CD4-positive, alpha-beta memory T cell (primary cell): ENCODE measurements at regions of chr13 and their contacts with region 1.

Region 1: DNA sequence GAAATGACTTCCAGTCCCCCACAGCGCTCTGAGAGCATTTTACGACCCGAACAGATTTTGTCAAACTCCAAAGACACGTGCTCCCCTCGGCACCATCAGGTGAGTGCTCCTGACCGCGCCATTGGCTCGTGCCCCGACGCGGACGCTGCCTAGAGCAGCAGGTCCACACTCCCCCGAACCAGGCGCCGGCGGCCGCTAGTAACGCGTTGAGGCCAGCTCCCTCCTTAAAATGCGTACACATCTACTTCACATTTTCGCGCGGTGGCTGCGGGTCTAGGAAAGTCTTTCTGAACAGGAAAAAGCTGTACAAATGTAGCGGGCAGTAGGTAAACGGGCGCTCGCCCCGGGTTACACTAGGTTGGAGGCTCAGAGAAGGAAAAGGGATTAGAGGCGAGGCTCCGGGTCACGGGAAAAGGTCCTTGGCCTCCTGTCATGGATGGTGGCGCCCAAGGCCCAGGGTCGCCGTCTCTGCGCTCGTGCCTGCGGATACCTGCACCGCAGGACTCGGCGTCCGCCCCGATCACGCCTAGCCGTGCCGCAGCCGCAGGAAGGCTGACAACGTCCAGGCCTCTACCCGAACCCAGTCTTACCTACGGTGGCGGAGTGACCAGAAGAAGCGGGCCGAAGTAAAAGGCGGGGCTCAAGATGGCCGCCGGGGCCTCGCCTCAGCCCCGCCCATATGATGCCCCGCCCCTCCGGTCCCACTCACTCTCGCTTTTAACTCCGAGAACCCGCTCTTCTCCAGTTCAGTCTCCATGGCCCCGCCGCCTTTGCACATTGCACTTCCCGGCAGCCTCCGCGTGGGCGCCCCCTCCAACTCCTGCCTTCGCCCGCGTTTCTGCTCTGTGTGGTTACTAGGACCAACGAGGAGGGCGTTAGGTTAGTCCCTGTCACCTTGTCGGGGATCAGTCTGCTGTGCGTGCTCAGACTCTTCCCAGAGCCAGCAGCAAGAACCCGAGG is at the start of gene ESD:
- DNase-seq: peak; percentile 80 to 91 (median 85)
- H3K4me3 ChIP-seq: peak within 1 kb of the TSS; percentile 84 to 89
- H3K4me3 Mint-ChIP-seq: peak within 1 kb of the TSS; percentile 90 to 99 (median 98)
- H3K27ac ChIP-seq: peak within 1 kb of the TSS; percentile 72
- H3K27ac Mint-ChIP-seq: peak within 1 kb of the TSS; percentile 93 to 99 (median 99)
- H3K4me1 ChIP-seq: peaks cover 44% of the 10 kb centered on the region
- H3K4me1 Mint-ChIP-seq: peaks cover 21 to 45% (median 36%) of the 10 kb centered on the region in 4 donors
- H3K27me3 ChIP-seq: no peaks in the 10 kb centered on the region
- H3K27me3 Mint-ChIP-seq: no peaks in the 10 kb centered on the region
- total RNA-seq, gene ESD: 57.5 to 61.2 TPM

Region 2: DNA sequence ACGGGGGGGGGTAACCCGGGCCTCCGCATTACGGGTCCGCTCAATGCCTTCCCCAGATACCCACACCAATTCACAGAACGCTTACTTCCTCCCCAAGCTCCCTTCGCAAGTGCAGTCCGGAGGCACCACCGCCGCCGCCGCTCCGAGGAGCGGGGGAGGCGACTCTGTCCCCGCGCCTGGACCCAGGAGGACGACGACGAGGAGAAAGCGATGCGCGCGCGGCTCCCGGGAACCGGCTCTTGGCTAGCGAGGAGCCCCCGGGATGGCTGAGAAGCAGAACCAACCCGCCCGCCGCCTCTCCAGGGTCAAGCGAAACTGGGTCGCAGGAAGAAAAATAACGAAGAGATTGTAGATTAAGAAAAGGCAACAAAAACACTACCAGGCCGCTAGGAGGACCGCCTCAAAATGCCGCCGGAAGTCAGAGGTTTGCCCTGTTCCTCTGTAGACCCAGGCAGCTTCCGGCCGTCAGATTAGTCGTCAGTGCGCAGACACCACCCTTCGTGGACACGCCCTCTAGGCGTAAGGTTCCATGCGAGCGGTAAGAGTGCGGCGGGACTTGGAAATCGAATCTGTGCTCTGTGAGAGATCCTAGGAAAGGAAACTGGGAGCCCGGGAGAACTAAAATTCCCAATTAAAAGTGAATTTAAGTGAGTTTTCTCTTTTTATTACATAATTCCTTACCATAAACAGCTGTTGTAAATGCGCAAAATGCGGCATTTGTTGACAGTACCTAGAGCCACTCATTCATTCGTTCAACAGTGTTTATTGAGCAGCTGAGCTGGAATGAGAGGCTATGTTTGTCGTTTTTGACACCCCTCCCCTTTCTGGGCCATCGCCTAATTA is 744.3 kb before region 1 on chr13 and contains the start of gene ZC3H13:
- CTCF ChIA-PET with region 1: no interaction called
- POLR2A ChIA-PET with region 1: no interaction called
- intact Hi-C with region 1: loop called (anchors 5 kb)
- DNase-seq: peak; percentile 91 to 97 (median 93)
- H3K4me3 ChIP-seq: peak within 1 kb of the TSS; percentile 59 to 88
- H3K4me3 Mint-ChIP-seq: peak within 1 kb of the TSS; percentile 88 to 99 (median 95)
- H3K27ac ChIP-seq: peak within 1 kb of the TSS; percentile 95
- H3K27ac Mint-ChIP-seq: peak within 1 kb of the TSS; percentile 93 to 99 (median 98)
- H3K4me1 ChIP-seq: peaks cover 38% of the 10 kb centered on the region
- H3K4me1 Mint-ChIP-seq: peaks cover 28 to 49% (median 37%) of the 10 kb centered on the region in 4 donors
- H3K27me3 ChIP-seq: peaks cover 4% of the 10 kb centered on the region
- H3K27me3 Mint-ChIP-seq: peaks cover 7 to 14% of the 10 kb centered on the region in 2 donors
- total RNA-seq, gene ZC3H13: 55.1 to 65.5 TPM

Region 3: GRCh38 chr13:46893798-46894560 is 97.2 kb after region 1 on chr13:
- CTCF ChIA-PET with region 1: no interaction called
- POLR2A ChIA-PET with region 1: no interaction called
- intact Hi-C with region 1: loop called (anchors 1 kb)
- DNase-seq: peak; percentile 43 to 55 (median 52)
- H3K4me3 ChIP-seq: peak overlapping the region in 1 of 2 donors; percentile 34
- H3K4me3 Mint-ChIP-seq: peak overlapping the region; percentile 68 to 77 (median 74)
- H3K27ac ChIP-seq: no peak overlapping the region
- H3K27ac Mint-ChIP-seq: no peak overlapping the region
- H3K4me1 ChIP-seq: peaks cover 13% of the 10 kb centered on the region
- H3K4me1 Mint-ChIP-seq: peaks cover 16 to 28% (median 21%) of the 10 kb centered on the region in 4 donors
- H3K27me3 ChIP-seq: peaks cover 10% of the 10 kb centered on the region
- H3K27me3 Mint-ChIP-seq: peaks cover 28 to 63% of the 10 kb centered on the region in 2 donors